Sigmoid colon (tissue), 7 donors: ENCODE measurements at regions of chr12 and their contacts with region 1.

Region 1: GRCh38 chr12:7060353-7060954 is at the start of gene C1S:
- DNase-seq: peak; percentile 95
- H3K4me3 ChIP-seq: peak within 1 kb of the TSS; percentile 38 to 55 (median 50)
- H3K27ac ChIP-seq: peak within 1 kb of the TSS; percentile 81 to 87 (median 84)
- H3K4me1 ChIP-seq: peaks cover 0 to 30% (median 24%) of the 10 kb centered on the region in 4 donors
- H3K27me3 ChIP-seq: no peaks in the 10 kb centered on the region
- CTCF ChIP-seq: peak; percentile 82 to 99 (median 89)
- EP300 ChIP-seq: peak in 3 of 4 donors; percentile 21 to 72 (median 54)
- POLR2A ChIP-seq: peak; percentile 51 to 79
- total RNA-seq, gene C1S: 420 to 622 (median 463) TPM

Region 2: GRCh38 chr12:7092229-7092985 is 32.0 kb after region 1 on chr12 and contains the start of gene C1R:
- intact Hi-C with region 1: loop called (anchors 1 kb)
- DNase-seq: peak; percentile 95
- H3K4me3 ChIP-seq: peak within 1 kb of the TSS; percentile 47 to 57 (median 54)
- H3K27ac ChIP-seq: peak within 1 kb of the TSS; percentile 77 to 85 (median 80)
- H3K4me1 ChIP-seq: peaks cover 0 to 35% (median 33%) of the 10 kb centered on the region in 4 donors
- H3K27me3 ChIP-seq: no peaks in the 10 kb centered on the region
- CTCF ChIP-seq: peak; percentile 86 to 91 (median 91)
- EP300 ChIP-seq: peak in 1 of 4 donors; percentile 13
- POLR2A ChIP-seq: no peak
- total RNA-seq, gene C1R: 328 to 493 (median 467) TPM

Region 3: DNA sequence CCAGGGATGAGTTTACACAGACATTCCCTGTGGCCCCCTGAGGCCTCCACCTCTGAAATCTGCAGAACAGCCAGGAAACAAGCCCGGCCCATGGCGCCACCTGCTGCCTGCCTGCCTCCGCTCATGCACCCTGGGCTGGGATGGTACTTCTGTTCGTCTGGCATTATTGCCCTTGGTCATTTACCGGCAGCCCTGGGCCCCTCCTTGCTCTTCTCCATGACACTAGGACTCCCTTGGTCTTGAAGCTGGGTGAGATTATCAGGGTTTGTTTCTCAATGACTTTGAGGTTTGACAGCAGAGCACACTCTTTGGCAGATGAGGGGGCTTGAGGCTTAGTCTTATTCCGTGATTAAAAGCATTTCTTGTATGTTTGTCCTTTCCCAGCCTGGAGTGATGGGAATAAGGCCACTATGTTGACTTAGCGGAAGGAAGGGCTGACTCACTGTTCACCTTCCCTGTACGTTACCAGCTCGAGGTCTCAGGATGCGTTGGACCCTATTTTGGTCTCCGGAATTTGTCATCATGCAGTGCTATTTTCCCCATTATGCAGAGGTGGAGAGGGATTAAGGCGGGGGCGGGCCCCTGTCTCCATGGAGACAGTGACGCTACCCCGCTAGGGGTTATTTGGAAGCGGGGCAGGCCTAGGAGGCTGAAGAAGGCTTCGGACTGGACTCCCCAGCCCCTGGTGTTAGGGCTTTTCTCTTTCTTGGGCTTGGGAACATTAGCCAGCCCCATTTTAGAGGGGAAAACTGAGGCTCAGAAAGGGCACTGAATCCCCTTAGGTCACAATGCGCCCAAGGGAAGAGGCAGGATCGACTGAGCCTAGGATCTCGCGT is 128.3 kb after region 1 on chr12:
- intact Hi-C with region 1: loop called (anchors 5 kb)
- DNase-seq: peak; percentile 79
- H3K4me3 ChIP-seq: peak overlapping the region; percentile 72 to 90 (median 75)
- H3K27ac ChIP-seq: peak overlapping the region; percentile 86 to 93 (median 90)
- H3K4me1 ChIP-seq: peaks cover 0 to 32% (median 19%) of the 10 kb centered on the region in 4 donors
- H3K27me3 ChIP-seq: no peaks in the 10 kb centered on the region
- CTCF ChIP-seq: peak in 3 of 4 experiments; percentile 31 to 44 (median 43)
- EP300 ChIP-seq: peak in 1 of 4 donors; percentile 26
- POLR2A ChIP-seq: no peak